Naive thymus-derived CD4-positive, alpha-beta T cell (primary cell): ENCODE measurements at regions of chr3 and their contacts with region 1.

Region 1: GRCh38 chr3:185937689-185938463 is at the start of gene TRA2B:
- DNase-seq: peak; percentile 93 to 99 (median 99)
- ATAC-seq: peak; percentile 94
- H3K4me3 ChIP-seq: peak within 1 kb of the TSS; percentile 99
- H3K4me3 Mint-ChIP-seq: peak within 1 kb of the TSS; percentile 91 to 100 (median 100)
- H3K27ac ChIP-seq: peak within 1 kb of the TSS; percentile 95
- H3K27ac Mint-ChIP-seq: peak within 1 kb of the TSS; percentile 99 to 100 (median 100)
- H3K4me1 ChIP-seq: peaks cover 16 to 20% of the 10 kb centered on the region in 2 donors
- H3K4me1 Mint-ChIP-seq: peaks cover 27 to 52% (median 41%) of the 10 kb centered on the region in 7 donors
- H3K27me3 ChIP-seq: no peaks in the 10 kb centered on the region
- H3K27me3 Mint-ChIP-seq: peaks cover 0 to 16% (median 0%) of the 10 kb centered on the region in 5 donors
- total RNA-seq, gene TRA2B: 194 to 673 (median 216) TPM

Region 2: GRCh38 chr3:184362668-184363540 is 1575.0 kb before region 1 on chr3:
- CTCF ChIA-PET with region 1: no interaction called
- POLR2A ChIA-PET with region 1: no interaction called
- intact Hi-C with region 1: loop called in 1 of 2 experiments (anchors 5 kb)
- DNase-seq: peak; percentile 74 to 94 (median 90)
- ATAC-seq: peak; percentile 87
- H3K4me3 ChIP-seq: peak overlapping the region; percentile 97
- H3K4me3 Mint-ChIP-seq: peak overlapping the region; percentile 95 to 100 (median 99)
- H3K27ac ChIP-seq: peak overlapping the region; percentile 84
- H3K27ac Mint-ChIP-seq: peak overlapping the region; percentile 91 to 98 (median 97)
- H3K4me1 ChIP-seq: peaks cover 11 to 13% of the 10 kb centered on the region in 2 donors
- H3K4me1 Mint-ChIP-seq: peaks cover 25 to 37% (median 30%) of the 10 kb centered on the region in 7 donors
- H3K27me3 ChIP-seq: no peaks in the 10 kb centered on the region
- H3K27me3 Mint-ChIP-seq: peaks cover 0 to 13% (median 0%) of the 10 kb centered on the region in 5 donors

Region 3: DNA sequence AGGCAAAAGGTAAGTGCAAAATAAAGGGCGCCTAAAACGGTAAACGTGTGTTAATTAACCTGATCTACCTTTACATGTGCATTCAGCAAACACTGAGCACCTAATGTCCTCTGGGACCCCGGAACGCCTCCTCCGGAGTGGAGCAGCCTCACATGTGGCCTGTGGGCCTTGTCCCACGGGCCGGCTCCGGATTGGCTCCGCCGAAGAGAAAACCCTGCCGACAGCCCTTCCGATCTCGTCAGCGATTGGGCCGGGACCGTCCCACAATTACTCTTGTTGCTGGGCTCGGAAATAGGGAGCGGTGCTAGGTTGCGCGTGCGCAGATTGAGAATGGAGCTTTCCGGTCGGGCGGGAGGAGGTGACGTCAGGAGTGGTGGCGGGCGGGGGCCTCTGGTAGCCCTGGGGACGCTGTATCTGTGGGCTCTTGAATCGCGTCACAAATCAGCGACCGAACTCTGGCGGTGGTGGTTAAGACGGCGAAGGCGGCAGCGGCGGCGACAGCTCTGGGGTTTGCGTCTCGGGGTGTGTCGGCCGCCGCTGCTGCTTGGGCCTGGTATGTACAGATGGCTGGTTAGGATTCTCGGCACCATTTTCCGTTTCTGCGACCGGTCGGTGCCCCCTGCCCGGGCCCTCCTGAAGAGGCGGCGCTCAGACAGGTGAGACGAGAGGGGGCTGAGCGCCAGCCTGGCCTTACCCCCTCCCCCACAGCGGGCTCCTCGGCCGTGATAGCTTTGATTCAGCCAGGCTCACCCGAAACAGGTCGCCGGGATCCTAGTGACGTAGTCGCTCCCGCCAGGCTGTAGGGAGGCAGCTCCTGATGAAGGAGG is 351.8 kb before region 1 on chr3 and contains the start of gene SENP2:
- CTCF ChIA-PET with region 1: interaction called, 3 read pairs
- POLR2A ChIA-PET with region 1: interaction called, 10 read pairs
- intact Hi-C with region 1: loop called (anchors 1 kb)
- DNase-seq: peak; percentile 96 to 100 (median 100)
- ATAC-seq: peak; percentile 94
- H3K4me3 ChIP-seq: peak within 1 kb of the TSS; percentile 95
- H3K4me3 Mint-ChIP-seq: peak within 1 kb of the TSS; percentile 79 to 94 (median 87)
- H3K27ac ChIP-seq: peak within 1 kb of the TSS; percentile 95
- H3K27ac Mint-ChIP-seq: peak within 1 kb of the TSS; percentile 86 to 99 (median 95)
- H3K4me1 ChIP-seq: peaks cover 21 to 27% of the 10 kb centered on the region in 2 donors
- H3K4me1 Mint-ChIP-seq: peaks cover 24 to 40% (median 31%) of the 10 kb centered on the region in 7 donors
- H3K27me3 ChIP-seq: no peaks in the 10 kb centered on the region
- H3K27me3 Mint-ChIP-seq: peaks cover 0 to 5% (median 0%) of the 10 kb centered on the region in 5 donors
- total RNA-seq, gene SENP2: 30.0 to 59.2 (median 47.3) TPM

Region 4: GRCh38 chr3:185789891-185790830 is 147.7 kb before region 1 on chr3:
- CTCF ChIA-PET with region 1: no interaction called
- POLR2A ChIA-PET with region 1: no interaction called
- intact Hi-C with region 1: no loop called
- DNase-seq: no peak
- ATAC-seq: no peak
- H3K4me3 ChIP-seq: no peak overlapping the region
- H3K4me3 Mint-ChIP-seq: no peak overlapping the region
- H3K27ac ChIP-seq: no peak overlapping the region
- H3K27ac Mint-ChIP-seq: no peak overlapping the region
- H3K4me1 ChIP-seq: no peaks in the 10 kb centered on the region
- H3K4me1 Mint-ChIP-seq: peaks cover 0 to 10% (median 0%) of the 10 kb centered on the region in 7 donors
- H3K27me3 ChIP-seq: no peaks in the 10 kb centered on the region
- H3K27me3 Mint-ChIP-seq: peaks cover 0 to 26% (median 12%) of the 10 kb centered on the region in 5 donors

Region 5: GRCh38 chr3:185887066-185887465 is 50.8 kb before region 1 on chr3:
- CTCF ChIA-PET with region 1: no interaction called
- POLR2A ChIA-PET with region 1: no interaction called
- intact Hi-C with region 1: no loop called
- DNase-seq: no peak
- ATAC-seq: no peak
- H3K4me3 ChIP-seq: no peak overlapping the region
- H3K4me3 Mint-ChIP-seq: no peak overlapping the region
- H3K27ac ChIP-seq: no peak overlapping the region
- H3K27ac Mint-ChIP-seq: no peak overlapping the region
- H3K4me1 ChIP-seq: no peaks in the 10 kb centered on the region
- H3K4me1 Mint-ChIP-seq: peaks cover 0 to 1% (median 0%) of the 10 kb centered on the region in 7 donors
- H3K27me3 ChIP-seq: no peaks in the 10 kb centered on the region
- H3K27me3 Mint-ChIP-seq: peaks cover 0 to 4% (median 4%) of the 10 kb centered on the region in 5 donors

Region 6: DNA sequence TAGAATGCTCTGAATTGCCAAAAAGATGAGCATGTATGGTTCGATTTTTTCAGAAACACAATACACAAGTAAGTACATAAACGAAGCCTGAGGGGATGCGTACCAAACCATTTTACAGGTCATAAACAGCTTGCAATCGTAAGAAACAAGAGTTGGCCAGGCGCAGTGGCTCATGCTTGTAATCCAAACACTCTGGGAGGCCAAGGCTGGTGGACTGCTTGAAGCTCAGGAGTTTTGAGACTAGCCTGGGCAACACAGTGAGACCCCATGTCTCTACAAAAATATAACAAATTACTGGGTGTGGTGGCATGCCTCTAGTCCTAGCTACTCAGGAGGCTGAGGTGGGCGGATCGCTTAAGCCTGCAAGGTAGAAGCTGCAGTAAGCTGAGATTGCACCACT is 13.5 kb before region 1 on chr3:
- CTCF ChIA-PET with region 1: interaction called, 6 read pairs
- POLR2A ChIA-PET with region 1: interaction called, 39 read pairs
- intact Hi-C with region 1: loop called (anchors 1 kb)
- DNase-seq: no peak
- ATAC-seq: no peak
- H3K4me3 ChIP-seq: no peak overlapping the region
- H3K4me3 Mint-ChIP-seq: peak overlapping the region in 3 of 10 donors; percentile 2 to 100 (median 19)
- H3K27ac ChIP-seq: no peak overlapping the region
- H3K27ac Mint-ChIP-seq: peak overlapping the region in 5 of 9 donors; percentile 17 to 77 (median 24)
- H3K4me1 ChIP-seq: peaks cover 30 to 42% of the 10 kb centered on the region in 2 donors
- H3K4me1 Mint-ChIP-seq: peaks cover 35 to 80% (median 68%) of the 10 kb centered on the region in 7 donors
- H3K27me3 ChIP-seq: no peaks in the 10 kb centered on the region
- H3K27me3 Mint-ChIP-seq: no peaks in the 10 kb centered on the region

Region 7: GRCh38 chr3:185992831-185993374 is 55.0 kb after region 1 on chr3:
- CTCF ChIA-PET with region 1: no interaction called
- POLR2A ChIA-PET with region 1: no interaction called
- intact Hi-C with region 1: no loop called
- DNase-seq: no peak
- ATAC-seq: no peak
- H3K4me3 ChIP-seq: no peak overlapping the region
- H3K4me3 Mint-ChIP-seq: no peak overlapping the region
- H3K27ac ChIP-seq: no peak overlapping the region
- H3K27ac Mint-ChIP-seq: no peak overlapping the region
- H3K4me1 ChIP-seq: no peaks in the 10 kb centered on the region
- H3K4me1 Mint-ChIP-seq: peaks cover 0 to 1% (median 0%) of the 10 kb centered on the region in 7 donors
- H3K27me3 ChIP-seq: no peaks in the 10 kb centered on the region
- H3K27me3 Mint-ChIP-seq: peaks cover 0 to 22% (median 0%) of the 10 kb centered on the region in 5 donors

Region 8: DNA sequence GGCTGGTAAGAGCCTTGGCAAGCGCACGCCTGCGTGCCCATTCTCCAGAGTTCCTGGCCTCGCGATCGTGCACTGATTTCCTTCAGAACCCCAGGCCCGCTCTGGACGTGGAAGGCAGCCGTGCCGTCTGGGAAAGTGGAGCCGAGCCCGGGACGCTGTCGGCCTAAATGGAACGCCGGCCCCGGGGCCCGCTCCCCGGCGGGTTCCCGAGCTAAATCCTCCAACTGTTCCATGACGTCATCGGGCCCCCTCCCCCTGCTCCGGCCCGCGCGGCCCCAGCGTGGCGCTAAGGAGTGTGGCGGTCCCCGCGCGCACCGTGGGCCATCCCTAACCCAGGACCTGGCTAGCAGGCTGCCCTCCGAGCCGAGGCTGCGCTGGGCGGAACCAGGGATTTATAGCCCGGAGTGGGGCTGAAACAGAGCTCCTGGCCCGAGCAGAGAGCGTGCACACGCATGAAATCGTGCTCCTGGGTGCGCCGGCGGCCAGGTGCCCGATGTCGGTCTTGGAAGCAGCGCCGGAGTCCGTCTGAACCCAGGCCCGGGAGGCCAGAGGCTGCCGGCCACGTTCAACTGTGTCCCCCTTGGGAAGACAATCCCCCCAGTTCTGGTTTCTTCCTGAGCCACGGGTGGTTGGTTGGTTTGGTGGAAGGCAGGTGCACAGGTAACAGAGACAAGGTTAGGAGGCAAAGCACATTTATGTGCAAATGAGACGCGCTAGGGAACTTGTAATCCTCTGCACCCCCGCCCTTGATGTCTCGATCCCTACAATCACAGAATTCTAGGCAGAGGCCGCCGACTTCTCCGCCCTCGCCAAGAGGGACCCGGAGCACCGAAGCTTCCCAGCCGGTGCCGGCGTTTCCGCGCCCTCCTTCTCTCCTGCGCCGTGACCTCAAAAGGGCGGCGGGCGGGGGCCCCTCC is 255.9 kb after region 1 on chr3:
- CTCF ChIA-PET with region 1: no interaction called
- POLR2A ChIA-PET with region 1: no interaction called
- intact Hi-C with region 1: no loop called
- DNase-seq: no peak
- ATAC-seq: no peak
- H3K4me3 ChIP-seq: no peak overlapping the region
- H3K4me3 Mint-ChIP-seq: peak overlapping the region in 6 of 10 donors; percentile 31 to 64 (median 55)
- H3K27ac ChIP-seq: no peak overlapping the region
- H3K27ac Mint-ChIP-seq: no peak overlapping the region
- H3K4me1 ChIP-seq: no peaks in the 10 kb centered on the region
- H3K4me1 Mint-ChIP-seq: peaks cover 0 to 9% (median 0%) of the 10 kb centered on the region in 7 donors
- H3K27me3 ChIP-seq: no peaks in the 10 kb centered on the region
- H3K27me3 Mint-ChIP-seq: peaks cover 24 to 52% (median 33%) of the 10 kb centered on the region in 5 donors

Region 9: GRCh38 chr3:186570096-186570940 is 632.4 kb after region 1 on chr3 and contains the start of gene DNAJB11:
- CTCF ChIA-PET with region 1: no interaction called
- POLR2A ChIA-PET with region 1: interaction called, 29 read pairs
- intact Hi-C with region 1: loop called (anchors 1 kb)
- DNase-seq: peak; percentile 83 to 100 (median 99)
- ATAC-seq: peak; percentile 91
- H3K4me3 ChIP-seq: peak within 1 kb of the TSS; percentile 85
- H3K4me3 Mint-ChIP-seq: peak within 1 kb of the TSS; percentile 83 to 98 (median 95)
- H3K27ac ChIP-seq: peak within 1 kb of the TSS; percentile 95
- H3K27ac Mint-ChIP-seq: peak within 1 kb of the TSS; percentile 85 to 99 (median 98)
- H3K4me1 ChIP-seq: peaks cover 25 to 33% of the 10 kb centered on the region in 2 donors
- H3K4me1 Mint-ChIP-seq: peaks cover 20 to 70% (median 66%) of the 10 kb centered on the region in 7 donors
- H3K27me3 ChIP-seq: no peaks in the 10 kb centered on the region
- H3K27me3 Mint-ChIP-seq: peaks cover 0 to 4% (median 0%) of the 10 kb centered on the region in 5 donors
- total RNA-seq, gene DNAJB11: 29.9 to 75.2 (median 63.1) TPM

Region 10: GRCh38 chr3:187139126-187139894 is 1201.4 kb after region 1 on chr3 and contains the start of gene RPL39L:
- CTCF ChIA-PET with region 1: no interaction called
- POLR2A ChIA-PET with region 1: no interaction called
- intact Hi-C with region 1: loop called (anchors 5 kb)
- DNase-seq: peak; percentile 87 to 95 (median 92)
- ATAC-seq: peak; percentile 97
- H3K4me3 ChIP-seq: peak within 1 kb of the TSS; percentile 94
- H3K4me3 Mint-ChIP-seq: peak within 1 kb of the TSS; percentile 80 to 94 (median 89)
- H3K27ac ChIP-seq: peak within 1 kb of the TSS; percentile 76
- H3K27ac Mint-ChIP-seq: peak within 1 kb of the TSS; percentile 86 to 98 (median 94)
- H3K4me1 ChIP-seq: peaks cover 9 to 17% of the 10 kb centered on the region in 2 donors
- H3K4me1 Mint-ChIP-seq: peaks cover 6 to 26% (median 17%) of the 10 kb centered on the region in 7 donors
- H3K27me3 ChIP-seq: no peaks in the 10 kb centered on the region
- H3K27me3 Mint-ChIP-seq: peaks cover 0 to 2% (median 0%) of the 10 kb centered on the region in 5 donors
- total RNA-seq, gene RPL39L: 0.81 to 14.0 (median 2.8) TPM in 4 of 5 experiments, not detected in the other